ENCODE measurements at regions of chr2 and their contacts with region 1.

Region 1: DNA sequence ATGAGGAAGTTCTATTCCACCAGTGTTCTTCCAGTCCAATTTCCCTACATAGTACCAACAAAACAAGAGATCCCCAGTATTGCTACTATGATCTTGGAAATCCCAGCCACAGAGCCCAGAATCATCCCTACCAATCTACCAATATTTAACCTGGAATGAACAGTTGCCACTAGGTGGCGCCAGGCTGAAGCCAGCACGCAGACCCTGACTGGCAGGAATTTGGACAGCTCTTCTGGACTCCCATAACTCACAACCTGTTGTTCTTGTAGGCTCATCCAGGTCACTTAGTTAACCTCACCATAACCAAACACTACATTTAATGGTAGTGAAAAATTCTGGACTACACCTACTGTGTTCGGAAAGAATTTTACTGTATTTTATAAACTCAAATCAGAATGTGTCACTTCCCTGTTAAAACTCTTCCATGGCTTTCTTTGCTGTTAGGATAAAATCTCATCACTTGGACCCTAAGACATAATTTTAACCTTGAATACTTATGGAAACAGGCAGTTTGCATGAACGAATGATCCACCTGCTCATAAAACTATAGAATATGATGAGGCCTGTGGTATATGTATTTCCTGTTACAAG is 59.8 kb upstream of the SLC38A11 start:
- DNase-seq: peak; percentile 61 to 90 (median 77)
- H3K4me3 ChIP-seq: no peak overlapping the region
- H3K27ac ChIP-seq: no peak overlapping the region
- H3K4me1 ChIP-seq: peaks cover 0 to 6% of the 10 kb centered on the region in 2 donors
- H3K27me3 ChIP-seq: no peaks in the 10 kb centered on the region
- CTCF ChIP-seq: peak; percentile 64 to 93 (median 75)
- POLR2A ChIP-seq: no peak

Region 2: GRCh38 chr2:164816046-164816445 is 199.1 kb before region 1 on chr2:
- intact Hi-C with region 1: no loop called
- DNase-seq: no peak
- H3K4me3 ChIP-seq: no peak overlapping the region
- H3K27ac ChIP-seq: no peak overlapping the region
- H3K4me1 ChIP-seq: peaks cover 19 to 45% of the 10 kb centered on the region in 2 donors
- H3K27me3 ChIP-seq: no peaks in the 10 kb centered on the region
- CTCF ChIP-seq: no peak
- POLR2A ChIP-seq: no peak

Region 3: DNA sequence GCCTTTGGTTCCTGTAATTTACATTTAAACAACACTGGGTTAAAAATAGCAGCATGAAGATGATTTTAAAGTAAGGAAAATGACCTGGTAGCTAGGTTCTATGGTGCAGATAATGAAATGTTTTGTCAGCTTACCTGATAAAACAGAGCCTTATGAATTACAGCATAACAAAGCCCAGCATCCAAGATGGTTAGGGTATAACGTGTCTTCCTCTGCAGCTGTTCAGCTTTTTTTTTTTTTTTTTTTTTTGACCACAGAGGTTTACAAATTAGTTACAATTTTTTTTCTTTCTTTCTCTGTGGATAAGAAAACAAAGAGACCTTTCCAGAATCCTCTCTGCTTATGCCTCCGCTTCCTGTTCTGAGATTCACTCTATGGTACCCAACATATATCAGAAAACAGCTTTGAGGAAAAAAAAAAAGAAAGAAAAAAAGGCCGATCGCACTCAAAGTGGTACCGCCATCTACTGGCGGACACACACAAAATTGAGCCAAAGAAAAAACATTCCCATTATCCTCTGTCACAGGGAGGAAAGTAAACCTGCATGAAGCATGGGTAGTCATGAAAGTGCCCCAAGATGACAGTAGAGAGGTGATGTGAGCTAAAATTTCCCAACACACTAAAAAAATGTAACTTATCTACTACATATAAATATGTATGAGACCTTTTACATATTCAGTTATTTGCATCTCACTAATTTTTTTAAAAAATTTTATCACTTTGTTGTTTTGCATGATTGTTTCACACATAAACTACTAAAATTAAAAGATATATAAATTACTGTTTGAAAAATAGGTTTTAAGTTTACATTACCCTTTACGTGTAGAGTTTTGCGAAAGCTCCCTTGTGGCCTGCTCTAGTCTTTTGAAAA is 188.8 kb after region 1 on chr2 and contains the start of gene SCN3A:
- intact Hi-C with region 1: loop called in 1 of 2 experiments (anchors 5 kb)
- DNase-seq: peak in 6 of 7 donors; percentile 15 to 55 (median 23)
- H3K4me3 ChIP-seq: no peak within 1 kb of the TSS
- H3K27ac ChIP-seq: no peak within 1 kb of the TSS
- H3K4me1 ChIP-seq: no peaks in the 10 kb centered on the region
- H3K27me3 ChIP-seq: no peaks in the 10 kb centered on the region
- CTCF ChIP-seq: peak; percentile 30 to 79 (median 64)
- POLR2A ChIP-seq: no peak
- total RNA-seq, gene SCN3A: 0.17 to 4.7 (median 0.66) TPM

Region 4: GRCh38 chr2:165214093-165214492 is 198.9 kb after region 1 on chr2:
- intact Hi-C with region 1: loop called in 1 of 2 experiments (anchors 5 kb)
- DNase-seq: no peak
- H3K4me3 ChIP-seq: no peak overlapping the region
- H3K27ac ChIP-seq: no peak overlapping the region
- H3K4me1 ChIP-seq: no peaks in the 10 kb centered on the region
- H3K27me3 ChIP-seq: no peaks in the 10 kb centered on the region
- CTCF ChIP-seq: no peak
- POLR2A ChIP-seq: no peak

Region 5: DNA sequence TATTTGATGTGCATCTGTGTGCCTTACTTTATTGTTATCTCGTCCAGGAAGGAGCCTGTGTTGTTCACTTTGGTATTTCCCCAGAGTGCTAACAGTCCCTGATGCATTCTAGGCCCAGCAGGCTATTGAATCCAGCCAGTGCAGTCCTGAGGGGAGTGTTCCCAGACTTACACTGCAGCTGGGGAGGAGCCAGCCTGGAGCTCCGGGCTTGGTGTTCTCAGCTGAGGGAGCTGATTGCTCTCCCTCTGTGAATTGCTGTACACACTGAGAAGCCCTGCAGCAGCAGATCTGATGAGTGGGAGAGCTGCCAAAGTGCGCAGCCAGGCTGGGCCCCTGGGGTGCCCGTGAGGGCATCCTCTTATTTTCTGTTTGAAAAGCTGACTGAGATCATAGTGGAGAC is 619.7 kb after region 1 on chr2:
- intact Hi-C with region 1: no loop called
- DNase-seq: peak in 5 of 7 donors; percentile 14 to 76 (median 20)
- H3K4me3 ChIP-seq: no peak overlapping the region
- H3K27ac ChIP-seq: no peak overlapping the region
- H3K4me1 ChIP-seq: no peaks in the 10 kb centered on the region
- H3K27me3 ChIP-seq: no peaks in the 10 kb centered on the region
- CTCF ChIP-seq: no peak
- POLR2A ChIP-seq: no peak